Gastrocnemius medialis (tissue), 4 donors: ENCODE measurements at regions of chr2 and their contacts with region 1.

Region 1: DNA sequence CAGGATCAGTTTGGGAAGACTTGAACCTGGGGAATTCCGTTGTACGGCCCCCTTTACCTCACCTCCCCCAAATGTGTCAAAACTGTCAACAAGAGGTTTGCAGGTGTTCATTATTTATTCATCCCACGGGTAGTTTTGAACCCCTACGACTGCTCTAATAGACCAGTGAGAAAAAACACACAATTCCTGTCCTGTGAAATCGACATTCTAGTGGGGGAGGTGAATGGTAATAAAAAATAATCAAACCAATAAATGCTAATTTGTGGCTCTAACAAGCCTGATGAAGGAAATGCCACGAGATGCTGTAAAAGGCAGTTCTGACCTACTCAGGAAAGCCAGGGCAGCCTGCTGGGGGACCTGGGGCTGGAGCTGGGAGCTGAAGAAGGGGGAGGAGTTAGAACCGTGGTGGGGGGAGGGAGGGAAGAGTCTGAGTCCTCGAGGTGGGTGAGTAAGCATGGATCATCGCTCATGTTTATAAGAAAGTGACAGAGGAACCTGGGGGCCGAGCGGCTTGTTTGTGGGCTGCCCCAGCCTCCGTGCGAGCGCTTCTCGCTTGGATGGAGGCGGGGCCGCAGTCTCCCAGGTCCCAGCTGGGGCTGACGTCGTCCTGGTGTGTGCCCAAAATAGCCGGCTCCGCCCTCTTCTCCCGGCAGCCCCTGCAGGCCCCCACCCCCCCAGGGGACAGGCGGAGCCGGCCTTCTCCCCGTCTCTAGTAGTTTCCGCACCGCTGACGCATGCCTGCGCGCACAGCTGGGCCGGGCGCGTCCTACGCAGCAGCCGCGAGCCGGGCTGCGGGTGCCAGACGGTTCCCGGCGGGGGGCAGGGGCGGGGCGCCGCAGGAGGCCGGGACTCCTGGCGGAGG is at the start of gene DNAJB2:
- DNase-seq: peak; percentile 98
- ATAC-seq: peak; percentile 80 to 84
- H3K4me3 ChIP-seq: peak within 1 kb of the TSS; percentile 57 to 87 (median 76)
- H3K27ac ChIP-seq: peak within 1 kb of the TSS; percentile 92 to 98 (median 96)
- H3K4me1 ChIP-seq: peaks cover 30 to 33% of the 10 kb centered on the region in 2 donors
- H3K27me3 ChIP-seq: no peaks in the 10 kb centered on the region
- CTCF ChIP-seq: no peak
- POLR2A ChIP-seq: peak; percentile 94 to 96
- total RNA-seq, gene DNAJB2: 58.6 to 76.5 (median 71.8) TPM

Region 2: GRCh38 chr2:218286570-218287459 is 992.1 kb before region 1 on chr2:
- in situ Hi-C with region 1: no loop called
- intact Hi-C with region 1: loop called (anchors 10 kb)
- DNase-seq: peak; percentile 92 to 96
- ATAC-seq: peak; percentile 66 to 70
- H3K4me3 ChIP-seq: peak overlapping the region; percentile 59 to 70 (median 61)
- H3K27ac ChIP-seq: peak overlapping the region; percentile 93 to 100 (median 98)
- H3K4me1 ChIP-seq: peaks cover 92 to 97% of the 10 kb centered on the region in 2 donors
- H3K27me3 ChIP-seq: no peaks in the 10 kb centered on the region
- CTCF ChIP-seq: no peak
- POLR2A ChIP-seq: peak; percentile 66 to 69

Region 3: DNA sequence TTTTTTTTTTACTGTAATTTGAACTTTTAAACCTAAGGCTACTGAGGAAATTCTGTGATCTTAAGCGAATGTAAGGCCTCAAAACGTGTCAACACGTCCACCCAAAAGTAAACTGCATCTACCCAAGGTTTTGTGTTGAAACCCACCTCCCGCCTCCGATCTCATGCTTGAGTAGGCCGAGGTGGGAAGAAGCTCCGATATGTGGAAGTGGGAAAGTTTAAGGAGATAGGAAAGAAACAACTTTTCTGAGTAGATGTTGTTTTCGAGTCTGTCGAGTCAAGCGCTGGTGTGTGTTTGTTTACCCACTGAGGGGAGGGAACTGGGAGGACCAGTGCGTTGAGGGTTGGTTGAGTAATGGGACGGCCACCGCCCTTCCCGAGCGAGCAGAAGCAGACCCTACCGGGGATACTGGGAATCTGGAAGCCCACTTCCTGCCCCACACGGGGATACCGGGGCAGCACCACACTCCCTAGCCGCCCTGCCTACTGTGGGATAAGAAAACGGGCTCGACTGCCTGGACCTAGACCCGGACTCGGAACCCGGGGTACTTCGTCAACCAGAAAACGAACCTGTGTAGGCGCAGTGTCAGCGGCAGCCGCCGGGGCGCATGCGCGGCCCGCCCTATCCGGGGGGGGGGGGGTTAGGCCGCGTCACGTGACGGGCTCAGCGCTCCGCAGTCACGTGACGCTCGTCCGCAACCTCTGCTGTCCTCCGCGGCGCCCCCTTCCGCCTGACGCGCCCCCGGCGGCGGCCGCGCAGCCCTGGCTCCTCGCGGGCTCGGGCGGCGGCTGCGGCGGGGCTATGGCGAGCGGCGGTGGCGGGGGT is 101.1 kb before region 1 on chr2 and contains the start of gene RETREG2:
- in situ Hi-C with region 1: loop called in 1 of 4 experiments (anchors 25 kb)
- intact Hi-C with region 1: loop called (anchors 1 kb)
- DNase-seq: peak; percentile 86 to 89
- ATAC-seq: peak; percentile 85 to 90
- H3K4me3 ChIP-seq: peak within 1 kb of the TSS; percentile 87 to 96 (median 95)
- H3K27ac ChIP-seq: peak within 1 kb of the TSS; percentile 94 to 99 (median 99)
- H3K4me1 ChIP-seq: peaks cover 17 to 21% of the 10 kb centered on the region in 2 donors
- H3K27me3 ChIP-seq: no peaks in the 10 kb centered on the region
- CTCF ChIP-seq: peak; percentile 25 to 72 (median 66)
- POLR2A ChIP-seq: peak; percentile 96 to 99
- total RNA-seq, gene RETREG2: 39.8 to 57.2 (median 44.9) TPM

Region 4: DNA sequence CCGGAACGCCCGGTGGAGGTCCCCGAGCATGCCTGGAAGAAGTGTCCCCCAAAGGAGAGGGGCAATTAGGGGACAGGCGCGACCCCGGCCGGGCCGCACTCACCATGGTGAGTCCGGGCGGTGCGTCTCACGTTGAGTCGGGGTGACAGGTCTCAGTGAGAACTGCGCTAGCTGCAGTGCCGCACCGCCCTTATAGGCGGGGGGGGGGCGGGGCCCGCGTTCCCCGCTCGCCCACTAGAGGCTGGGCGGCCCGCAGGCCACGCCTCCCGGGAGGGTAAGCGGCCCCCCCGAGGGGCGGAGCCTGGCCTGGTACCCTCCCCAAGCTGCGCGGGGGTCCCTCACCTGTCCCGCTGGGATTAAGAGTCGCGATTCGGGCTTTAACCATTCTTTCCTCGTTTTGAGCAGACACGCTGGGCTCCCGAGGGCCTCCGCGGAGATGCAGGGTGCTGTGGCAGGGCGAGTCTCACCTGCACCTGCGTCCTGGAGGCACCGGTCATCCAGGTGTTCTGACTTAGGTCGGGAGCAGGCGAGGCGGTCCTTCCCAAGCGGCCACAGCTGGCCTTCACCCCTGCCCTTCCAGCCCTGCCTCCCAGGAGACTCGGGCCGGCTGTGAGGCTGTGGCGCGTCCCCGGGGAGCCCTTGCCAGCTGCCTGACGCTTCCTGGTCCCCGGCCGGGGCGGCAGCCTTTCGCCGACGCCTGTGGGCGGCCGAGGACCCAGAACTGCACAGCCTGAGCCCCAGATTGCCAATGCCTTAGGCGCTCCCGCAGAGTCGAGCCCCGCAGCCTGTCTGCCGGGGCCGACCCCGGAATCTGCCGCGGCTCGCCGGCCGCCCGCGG is 24.9 kb before region 1 on chr2 and contains the start of gene TUBA4A:
- in situ Hi-C with region 1: no loop called
- intact Hi-C with region 1: loop called (anchors 1 kb)
- DNase-seq: peak; percentile 76 to 88
- ATAC-seq: peak; percentile 69 to 72
- H3K4me3 ChIP-seq: peak within 1 kb of the TSS; percentile 68 to 88 (median 76)
- H3K27ac ChIP-seq: peak within 1 kb of the TSS; percentile 91 to 99 (median 96)
- H3K4me1 ChIP-seq: peaks cover 36 to 53% of the 10 kb centered on the region in 2 donors
- H3K27me3 ChIP-seq: no peaks in the 10 kb centered on the region
- CTCF ChIP-seq: peak in 3 of 5 experiments; percentile 23 to 34 (median 30)
- POLR2A ChIP-seq: peak; percentile 98
- total RNA-seq, gene TUBA4A: 351 to 797 (median 386) TPM

Region 5: GRCh38 chr2:219362524-219363164 is 83.8 kb after region 1 on chr2:
- in situ Hi-C with region 1: no loop called
- intact Hi-C with region 1: loop called (anchors 5 kb)
- DNase-seq: peak; percentile 90 to 96
- ATAC-seq: peak; percentile 97 to 99
- H3K4me3 ChIP-seq: no peak overlapping the region
- H3K27ac ChIP-seq: peak overlapping the region; percentile 78 to 88 (median 80)
- H3K4me1 ChIP-seq: peaks cover 22 to 24% of the 10 kb centered on the region in 2 donors
- H3K27me3 ChIP-seq: peaks cover 12 to 19% (median 17%) of the 10 kb centered on the region in 3 donors
- CTCF ChIP-seq: no peak
- POLR2A ChIP-seq: no peak

Region 6: DNA sequence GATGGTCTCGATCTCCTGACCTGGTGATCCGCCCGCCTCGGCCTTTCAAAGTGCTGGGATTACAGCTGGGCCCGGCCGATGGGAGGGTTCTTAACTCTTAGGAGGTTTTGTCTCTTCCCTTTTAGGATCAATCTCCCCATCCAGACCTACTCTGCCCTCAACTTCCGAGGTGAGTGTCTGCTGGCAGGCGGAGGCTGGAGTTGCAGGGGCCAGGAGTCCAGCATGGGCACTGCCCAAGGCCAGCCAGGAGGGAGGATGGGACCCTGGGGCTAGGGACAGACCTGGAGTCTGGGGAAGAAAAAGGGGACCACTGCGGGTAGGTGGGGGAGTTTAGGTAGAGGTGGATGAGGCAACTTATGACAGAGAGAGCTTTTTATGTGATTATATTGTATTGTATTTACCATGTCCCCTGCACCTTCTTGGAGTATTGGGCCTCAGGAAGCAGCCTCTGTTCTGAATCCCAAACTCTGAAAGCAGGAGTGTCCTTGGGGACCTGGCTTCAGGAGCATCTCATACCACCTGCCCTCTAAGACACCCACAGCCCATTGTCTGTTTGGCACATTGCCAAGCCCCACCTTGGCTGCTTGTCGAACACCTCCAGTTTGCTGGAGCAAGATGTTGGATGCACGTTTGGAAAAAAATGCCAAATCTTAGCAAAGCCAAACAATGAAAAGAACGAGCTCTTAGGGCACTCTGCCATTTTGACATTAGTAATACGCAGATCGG is 144.9 kb after region 1 on chr2:
- in situ Hi-C with region 1: no loop called
- intact Hi-C with region 1: no loop called
- DNase-seq: peak in 1 of 2 donors; percentile 52
- ATAC-seq: no peak
- H3K4me3 ChIP-seq: peak overlapping the region in 1 of 4 donors; percentile 19
- H3K27ac ChIP-seq: peak overlapping the region; percentile 95 to 100 (median 98)
- H3K4me1 ChIP-seq: peaks cover 17 to 47% of the 10 kb centered on the region in 2 donors
- H3K27me3 ChIP-seq: no peaks in the 10 kb centered on the region
- CTCF ChIP-seq: no peak
- POLR2A ChIP-seq: no peak

Region 7: DNA sequence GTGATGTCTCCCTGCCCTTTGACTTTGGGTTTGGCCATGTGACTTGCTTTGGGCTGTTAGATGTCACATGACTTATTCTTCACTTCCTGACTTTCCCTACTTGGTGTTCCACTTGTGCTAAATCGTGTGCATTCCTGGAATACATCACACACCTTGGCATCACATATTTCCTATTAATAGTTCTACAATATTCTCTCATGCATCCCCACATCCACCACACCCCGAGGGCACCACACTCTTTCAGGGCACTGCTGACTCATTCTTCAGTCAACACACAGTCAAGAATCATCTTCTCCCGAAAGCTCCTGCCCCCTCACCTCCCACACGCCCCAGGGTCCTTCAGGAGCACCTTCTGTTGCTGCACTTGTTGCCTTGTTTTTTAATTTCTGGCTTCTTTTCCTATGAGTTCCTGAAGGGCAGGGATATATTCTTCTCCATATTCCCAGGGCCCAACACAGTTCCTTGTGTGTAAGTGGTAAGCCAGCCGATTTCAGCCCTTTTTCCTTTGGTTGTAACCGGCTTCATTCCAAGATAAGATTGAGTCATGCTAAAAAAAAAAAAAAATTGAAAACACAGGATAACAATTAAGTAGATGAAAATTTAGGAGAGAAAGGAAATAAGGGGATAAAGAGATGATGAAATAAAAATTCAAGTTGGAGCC is 689.9 kb after region 1 on chr2:
- in situ Hi-C with region 1: no loop called
- intact Hi-C with region 1: no loop called
- DNase-seq: no peak
- ATAC-seq: no peak
- H3K4me3 ChIP-seq: no peak overlapping the region
- H3K27ac ChIP-seq: no peak overlapping the region
- H3K4me1 ChIP-seq: no peaks in the 10 kb centered on the region
- H3K27me3 ChIP-seq: no peaks in the 10 kb centered on the region
- CTCF ChIP-seq: no peak
- POLR2A ChIP-seq: no peak